Left ventricle myocardium inferior (tissue), 1 donor: ENCODE measurements at regions of chr13 and their contacts with region 1.

Region 1: GRCh38 chr13:32639502-32640105 is 53.4 kb downstream of the PDS5B start:
- DNase-seq: no peak
- H3K4me3 ChIP-seq: no peak overlapping the region
- H3K27ac ChIP-seq: no peak overlapping the region
- H3K4me1 ChIP-seq: peaks cover 22% of the 10 kb centered on the region
- H3K27me3 ChIP-seq: no peaks in the 10 kb centered on the region
- CTCF ChIP-seq: peak; percentile 92

Region 2: DNA sequence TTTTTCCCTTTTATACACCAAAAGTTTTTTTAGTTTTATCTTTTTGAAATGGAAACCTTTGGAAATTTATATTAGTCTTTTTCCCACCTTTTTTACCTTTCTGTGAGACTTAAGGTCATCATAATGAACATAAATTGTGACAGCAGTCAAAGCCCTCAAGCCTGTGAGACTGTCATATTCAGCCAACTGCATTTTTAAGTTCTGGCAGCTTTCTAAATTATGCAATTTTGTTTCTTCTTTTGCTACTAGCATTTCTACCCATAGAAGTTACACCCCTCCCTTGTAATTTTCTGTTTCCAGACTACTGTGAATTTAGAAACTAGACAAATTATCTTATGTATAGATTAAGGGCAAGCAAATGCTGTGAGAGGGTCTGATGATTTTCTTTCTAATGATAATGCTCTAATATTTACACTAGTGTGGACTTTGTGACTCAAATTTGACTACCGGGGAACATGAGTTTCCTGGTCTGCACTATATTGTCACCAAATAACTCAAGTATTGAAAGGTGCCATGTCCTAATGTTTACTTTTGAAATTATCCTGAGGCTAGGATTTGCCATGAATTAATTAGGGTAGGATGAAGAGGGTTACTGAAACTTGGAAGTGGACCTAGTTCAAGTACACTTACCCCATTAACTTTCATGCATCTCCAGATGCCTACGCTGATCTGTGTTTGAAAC is 564.3 kb before region 1 on chr13:
- intact Hi-C with region 1: no loop called
- DNase-seq: no peak
- H3K4me3 ChIP-seq: no peak overlapping the region
- H3K27ac ChIP-seq: no peak overlapping the region
- H3K4me1 ChIP-seq: peaks cover 82% of the 10 kb centered on the region
- H3K27me3 ChIP-seq: no peaks in the 10 kb centered on the region
- CTCF ChIP-seq: no peak

Region 3: DNA sequence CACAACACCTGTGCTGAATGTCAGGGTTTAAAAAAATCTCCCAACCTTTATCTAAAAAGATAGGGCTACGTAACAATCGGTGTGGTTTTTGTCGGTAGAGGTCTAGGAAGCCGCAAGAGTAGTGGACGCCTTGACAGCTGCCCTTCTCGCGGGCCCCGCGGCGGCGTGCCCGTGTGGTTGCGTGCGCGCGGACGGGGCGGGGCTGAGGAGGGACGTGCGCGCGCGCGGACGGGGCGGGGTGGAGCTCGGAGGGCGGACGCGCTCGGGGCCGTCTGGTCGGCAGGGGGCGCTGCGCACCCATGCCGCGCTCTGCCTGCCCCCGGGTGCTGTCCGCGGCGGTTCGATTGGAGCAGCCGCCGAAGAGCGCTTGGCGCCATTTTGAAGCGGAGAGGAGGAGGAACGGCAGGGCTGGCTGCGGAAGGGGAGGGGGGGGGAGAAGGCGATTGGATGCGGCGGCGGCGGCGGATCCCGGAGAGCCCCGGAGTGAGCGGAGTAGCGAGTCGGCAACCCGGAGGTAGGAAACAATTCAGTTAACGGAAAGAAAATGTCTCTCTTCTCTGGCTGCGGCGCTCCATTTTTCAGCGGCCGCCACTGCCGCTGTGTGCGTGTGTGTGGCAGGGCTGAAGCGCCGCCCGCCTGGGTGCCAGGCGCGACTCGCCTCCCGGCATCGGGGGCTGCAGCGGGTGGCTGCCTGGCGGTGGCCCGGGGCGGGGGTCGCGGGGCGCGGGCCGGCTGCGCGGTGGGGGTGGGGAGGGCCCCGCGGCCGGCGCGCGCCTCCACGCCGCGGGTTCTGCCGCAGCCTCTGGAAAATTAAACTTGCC is 53.3 kb before region 1 on chr13 and contains the start of gene PDS5B:
- intact Hi-C with region 1: loop called (anchors 5 kb)
- DNase-seq: peak; percentile 94
- H3K4me3 ChIP-seq: peak within 1 kb of the TSS; percentile 73
- H3K27ac ChIP-seq: peak within 1 kb of the TSS; percentile 90
- H3K4me1 ChIP-seq: peaks cover 47% of the 10 kb centered on the region
- H3K27me3 ChIP-seq: no peaks in the 10 kb centered on the region
- CTCF ChIP-seq: peak; percentile 95
- total RNA-seq, gene PDS5B: 20.4 TPM

Region 4: DNA sequence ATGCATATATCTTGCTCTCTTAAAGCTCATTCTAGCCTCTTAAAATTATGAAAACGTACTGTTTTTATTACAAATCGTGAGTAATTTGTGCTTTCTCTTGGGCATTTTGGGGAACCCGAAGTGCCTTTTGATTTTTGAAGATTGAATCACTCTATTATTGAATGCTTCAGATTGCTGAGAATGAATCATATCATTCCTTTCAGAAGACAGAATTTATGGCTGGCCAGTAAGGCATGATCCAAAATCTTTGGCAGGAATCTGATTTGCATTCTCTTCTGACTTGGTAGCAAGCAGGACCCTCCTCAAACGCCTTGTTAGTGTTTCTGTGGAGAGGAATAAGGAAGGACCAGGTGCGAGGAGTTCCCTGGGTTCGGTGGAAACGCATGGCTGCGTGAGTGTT is 596.4 kb after region 1 on chr13:
- intact Hi-C with region 1: no loop called
- DNase-seq: no peak
- H3K4me3 ChIP-seq: no peak overlapping the region
- H3K27ac ChIP-seq: peak overlapping the region; percentile 84
- H3K4me1 ChIP-seq: peaks cover 71% of the 10 kb centered on the region
- H3K27me3 ChIP-seq: no peaks in the 10 kb centered on the region
- CTCF ChIP-seq: no peak